Gastrocnemius medialis (tissue), 4 donors: ENCODE measurements at regions of chr1 and their contacts with region 1.

Region 1: DNA sequence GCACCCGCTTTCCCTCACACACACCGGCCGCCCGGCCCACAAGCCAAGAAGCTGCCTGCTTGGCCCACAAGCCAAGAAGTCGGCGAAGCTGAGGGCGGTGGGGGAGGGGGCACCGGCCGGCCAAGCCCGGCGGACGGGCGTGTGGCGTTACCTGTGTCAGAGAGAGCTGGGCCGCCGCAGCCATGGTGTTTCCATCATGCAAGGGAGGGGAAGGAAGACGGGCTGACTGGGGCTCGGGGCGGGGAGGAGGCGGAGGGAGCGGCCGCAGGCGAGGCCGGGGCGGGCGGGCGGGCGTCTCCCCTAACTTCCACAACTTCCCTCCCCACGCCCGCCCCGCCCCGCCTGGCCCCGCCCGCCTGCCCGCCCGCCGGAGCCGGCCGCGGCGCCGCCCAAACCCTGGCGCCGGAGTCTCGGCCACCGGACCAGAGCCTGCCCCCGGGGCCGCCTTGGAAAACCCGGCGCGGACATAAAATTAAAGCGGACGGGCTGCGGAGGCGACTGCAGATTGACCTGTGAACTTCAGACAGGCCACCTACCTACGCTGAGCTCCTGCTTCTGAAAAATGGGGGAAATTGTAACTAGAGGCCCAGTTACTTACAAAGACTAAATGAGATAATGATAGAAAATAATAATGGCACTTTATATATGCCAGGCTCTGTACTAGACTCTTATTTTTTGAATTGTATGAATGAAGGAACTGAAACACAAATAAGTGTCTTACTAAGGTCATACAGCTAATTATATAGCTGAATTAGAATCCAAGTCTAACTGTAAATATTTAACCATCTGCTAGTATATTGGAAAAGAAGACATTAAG is at the start of gene EPS15:
- DNase-seq: peak; percentile 85 to 86
- ATAC-seq: peak; percentile 57 to 59
- H3K4me3 ChIP-seq: peak within 1 kb of the TSS; percentile 75 to 82 (median 80)
- H3K27ac ChIP-seq: peak within 1 kb of the TSS; percentile 95 to 97 (median 97)
- H3K4me1 ChIP-seq: peaks cover 32 to 34% of the 10 kb centered on the region in 2 donors
- H3K27me3 ChIP-seq: no peaks in the 10 kb centered on the region
- CTCF ChIP-seq: peak in 1 of 5 experiments; percentile 6
- POLR2A ChIP-seq: peak; percentile 61 to 76
- total RNA-seq, gene EPS15: 44.8 to 121 (median 71.0) TPM

Region 2: GRCh38 chr1:51115714-51116404 is 403.4 kb before region 1 on chr1:
- in situ Hi-C with region 1: no loop called
- intact Hi-C with region 1: no loop called
- DNase-seq: no peak
- ATAC-seq: no peak
- H3K4me3 ChIP-seq: no peak overlapping the region
- H3K27ac ChIP-seq: no peak overlapping the region
- H3K4me1 ChIP-seq: no peaks in the 10 kb centered on the region
- H3K27me3 ChIP-seq: no peaks in the 10 kb centered on the region
- CTCF ChIP-seq: no peak
- POLR2A ChIP-seq: no peak

Region 3: GRCh38 chr1:51410568-51411460 is 108.4 kb before region 1 on chr1:
- in situ Hi-C with region 1: loop called in 1 of 4 experiments (anchors 25 kb)
- intact Hi-C with region 1: loop called (anchors 5 kb)
- DNase-seq: no peak
- ATAC-seq: peak; percentile 51 to 63
- H3K4me3 ChIP-seq: no peak overlapping the region
- H3K27ac ChIP-seq: peak overlapping the region; percentile 38 to 63 (median 48)
- H3K4me1 ChIP-seq: peaks cover 11 to 14% of the 10 kb centered on the region in 2 donors
- H3K27me3 ChIP-seq: no peaks in the 10 kb centered on the region
- CTCF ChIP-seq: no peak
- POLR2A ChIP-seq: no peak

Region 4: GRCh38 chr1:51564124-51564523 is 44.9 kb after region 1 on chr1:
- in situ Hi-C with region 1: no loop called
- intact Hi-C with region 1: loop called (anchors 1 kb)
- DNase-seq: no peak
- ATAC-seq: no peak
- H3K4me3 ChIP-seq: no peak overlapping the region
- H3K27ac ChIP-seq: peak overlapping the region; percentile 91 to 94 (median 93)
- H3K4me1 ChIP-seq: peaks cover 62 to 65% of the 10 kb centered on the region in 2 donors
- H3K27me3 ChIP-seq: no peaks in the 10 kb centered on the region
- CTCF ChIP-seq: no peak
- POLR2A ChIP-seq: no peak

Region 5: DNA sequence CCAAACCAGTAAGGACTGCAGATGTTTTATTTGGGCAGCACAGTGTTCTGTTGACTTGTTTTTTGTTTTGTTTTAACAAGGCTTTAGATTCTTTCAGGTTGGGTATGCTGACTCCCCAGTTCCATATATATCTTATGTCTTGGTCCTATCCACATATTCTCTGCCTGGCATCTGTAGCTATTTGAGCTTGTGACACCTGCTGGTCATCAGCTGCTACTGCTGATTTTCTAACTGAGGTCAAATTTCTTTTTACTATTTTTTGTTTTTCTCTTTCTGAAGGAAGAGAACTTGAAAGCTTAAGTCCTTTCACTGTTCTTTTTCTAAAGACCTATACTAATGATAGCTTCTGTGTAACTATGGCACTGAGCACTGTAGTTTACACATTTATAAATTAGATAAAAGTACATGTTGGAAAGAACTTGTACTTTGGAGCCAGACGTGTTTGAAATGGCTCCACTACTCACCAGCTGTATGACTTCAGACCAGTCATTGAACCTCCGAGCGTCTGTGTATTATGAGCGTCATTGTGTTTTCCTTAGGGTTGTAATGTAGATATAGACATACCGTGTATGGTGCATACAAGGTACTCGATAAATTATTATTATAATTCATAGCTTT is 249.8 kb after region 1 on chr1:
- in situ Hi-C with region 1: no loop called
- intact Hi-C with region 1: loop called (anchors 2 kb)
- DNase-seq: no peak
- ATAC-seq: peak; percentile 76 to 83
- H3K4me3 ChIP-seq: no peak overlapping the region
- H3K27ac ChIP-seq: peak overlapping the region; percentile 48 to 60 (median 56)
- H3K4me1 ChIP-seq: peaks cover 0 to 8% of the 10 kb centered on the region in 2 donors
- H3K27me3 ChIP-seq: no peaks in the 10 kb centered on the region
- CTCF ChIP-seq: peak; percentile 66 to 80 (median 72)
- POLR2A ChIP-seq: no peak

Region 6: DNA sequence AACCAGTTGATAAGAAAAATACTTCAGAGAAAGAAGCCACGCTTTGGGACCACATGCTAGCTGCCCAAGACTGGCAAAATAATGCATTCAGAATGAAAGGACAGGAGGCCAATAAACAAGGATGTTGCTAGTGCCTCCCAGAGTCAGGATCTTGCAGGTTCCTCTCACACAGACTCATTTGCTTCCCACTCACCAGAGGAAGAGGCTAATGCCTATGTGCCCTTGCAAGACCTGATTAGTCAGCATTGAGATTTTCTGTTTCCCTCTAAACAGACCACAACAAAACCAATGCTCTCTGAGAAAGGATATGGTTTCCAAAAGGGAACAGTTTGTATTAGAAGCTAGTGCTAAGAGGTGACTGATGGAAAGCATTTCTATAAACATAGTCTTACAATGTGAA is 273.6 kb after region 1 on chr1:
- in situ Hi-C with region 1: no loop called
- intact Hi-C with region 1: no loop called
- DNase-seq: no peak
- ATAC-seq: peak in 1 of 2 donors; percentile 11
- H3K4me3 ChIP-seq: no peak overlapping the region
- H3K27ac ChIP-seq: peak overlapping the region in 3 of 4 donors; percentile 15 to 61 (median 27)
- H3K4me1 ChIP-seq: no peaks in the 10 kb centered on the region
- H3K27me3 ChIP-seq: no peaks in the 10 kb centered on the region
- CTCF ChIP-seq: no peak
- POLR2A ChIP-seq: no peak